ENCODE measurements at regions of chr3 and their contacts with region 1.

Region 1: DNA sequence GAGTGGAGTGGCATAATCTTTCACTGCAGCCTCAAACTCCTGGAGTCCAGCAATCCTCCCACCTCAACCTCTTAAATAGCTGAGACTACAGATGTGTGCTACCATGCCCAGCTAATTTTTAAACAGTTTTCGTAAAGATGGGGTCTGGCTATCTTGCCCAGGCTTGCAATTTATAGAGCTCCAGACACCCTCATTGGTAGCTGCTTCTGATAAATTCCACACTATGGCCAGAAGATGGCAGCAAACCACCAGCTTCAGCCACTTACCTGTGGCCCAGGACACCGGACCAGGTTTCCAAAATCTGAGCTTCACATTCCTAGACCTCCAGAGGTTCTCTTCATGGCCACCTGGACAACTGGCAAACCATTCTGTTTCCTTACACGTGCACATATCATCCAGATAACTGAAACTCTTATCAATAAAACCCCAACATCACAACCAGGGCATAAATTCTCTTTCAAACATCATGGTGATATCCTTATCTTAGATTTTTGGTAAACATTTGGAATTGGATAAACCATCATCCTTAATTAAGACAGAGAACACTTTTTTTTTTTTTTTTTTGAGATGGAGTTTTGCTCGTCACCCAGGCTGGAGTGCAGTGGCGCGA is 28.9 kb downstream of the FBXW12 start:
- DNase-seq: peak; percentile 69
- ATAC-seq: peak; percentile 80
- H3K4me3 ChIP-seq: no peak overlapping the region
- H3K27ac ChIP-seq: no peak overlapping the region
- H3K4me1 ChIP-seq: peaks cover 14 to 39% of the 10 kb centered on the region in 2 experiments
- H3K27me3 ChIP-seq: no peaks in the 10 kb centered on the region
- CTCF ChIP-seq: peak; percentile 69 to 97 (median 83)
- POLR2A ChIP-seq: no peak
- RAD21 ChIP-seq: peak; percentile 97

Region 2: GRCh38 chr3:48023377-48023776 is 377.6 kb before region 1 on chr3:
- CTCF ChIA-PET with region 1: no interaction called
- POLR2A ChIA-PET with region 1: no interaction called
- RAD21 ChIA-PET with region 1: no interaction called
- intact Hi-C with region 1: no loop called
- DNase-seq: no peak
- ATAC-seq: no peak
- H3K4me3 ChIP-seq: no peak overlapping the region
- H3K27ac ChIP-seq: no peak overlapping the region
- H3K4me1 ChIP-seq: peaks cover 9 to 18% of the 10 kb centered on the region in 2 experiments
- H3K27me3 ChIP-seq: no peaks in the 10 kb centered on the region
- CTCF ChIP-seq: no peak
- POLR2A ChIP-seq: no peak
- RAD21 ChIP-seq: no peak

Region 3: DNA sequence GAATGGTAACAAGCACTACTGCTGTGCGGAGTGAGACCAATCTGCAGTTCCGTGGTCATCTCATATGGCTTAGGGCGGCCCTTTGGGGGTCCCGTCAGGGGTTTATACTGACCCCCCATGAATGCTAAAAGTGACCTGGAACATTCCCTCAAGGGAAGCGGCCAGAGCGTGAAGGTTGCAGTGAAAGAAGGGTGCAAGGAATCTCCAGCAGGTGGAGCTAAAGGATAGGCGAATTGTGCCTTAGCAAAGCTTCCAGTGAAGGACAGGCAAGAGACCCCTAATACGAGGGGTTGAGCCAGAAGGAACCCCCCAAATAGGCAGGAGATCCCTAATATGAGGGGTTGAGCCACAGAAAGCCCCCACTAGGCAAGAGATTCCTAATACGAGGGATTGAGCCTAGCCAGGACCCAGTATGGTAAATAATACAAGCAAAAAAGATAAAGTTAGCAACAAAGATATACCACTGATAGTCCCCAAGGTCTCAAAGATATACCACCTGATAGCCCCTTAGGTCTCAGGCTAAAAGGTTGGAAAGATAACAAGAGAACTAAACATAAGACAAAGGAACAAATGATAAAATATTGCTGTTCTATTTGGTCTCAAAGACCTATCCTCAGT is 127.2 kb before region 1 on chr3:
- CTCF ChIA-PET with region 1: interaction called, 17 read pairs
- POLR2A ChIA-PET with region 1: no interaction called
- RAD21 ChIA-PET with region 1: interaction called, 3 read pairs
- intact Hi-C with region 1: loop called (anchors 1 kb)
- DNase-seq: peak; percentile 56
- ATAC-seq: peak; percentile 82
- H3K4me3 ChIP-seq: no peak overlapping the region
- H3K27ac ChIP-seq: no peak overlapping the region
- H3K4me1 ChIP-seq: no peaks in the 10 kb centered on the region
- H3K27me3 ChIP-seq: no peaks in the 10 kb centered on the region
- CTCF ChIP-seq: peak; percentile 82 to 91 (median 84)
- POLR2A ChIP-seq: no peak
- RAD21 ChIP-seq: peak; percentile 89

Region 4: GRCh38 chr3:48429317-48429959 is 28.5 kb after region 1 on chr3:
- CTCF ChIA-PET with region 1: interaction called, 386 read pairs
- POLR2A ChIA-PET with region 1: interaction called, 4 read pairs
- RAD21 ChIA-PET with region 1: interaction called, 13 to 23 read pairs
- intact Hi-C with region 1: no loop called
- DNase-seq: no peak
- ATAC-seq: peak; percentile 58
- H3K4me3 ChIP-seq: peak overlapping the region; percentile 58 to 70
- H3K27ac ChIP-seq: peak overlapping the region; percentile 81
- H3K4me1 ChIP-seq: peaks cover 44 to 59% of the 10 kb centered on the region in 2 experiments
- H3K27me3 ChIP-seq: no peaks in the 10 kb centered on the region
- CTCF ChIP-seq: no peak
- POLR2A ChIP-seq: no peak
- RAD21 ChIP-seq: no peak

Region 5: DNA sequence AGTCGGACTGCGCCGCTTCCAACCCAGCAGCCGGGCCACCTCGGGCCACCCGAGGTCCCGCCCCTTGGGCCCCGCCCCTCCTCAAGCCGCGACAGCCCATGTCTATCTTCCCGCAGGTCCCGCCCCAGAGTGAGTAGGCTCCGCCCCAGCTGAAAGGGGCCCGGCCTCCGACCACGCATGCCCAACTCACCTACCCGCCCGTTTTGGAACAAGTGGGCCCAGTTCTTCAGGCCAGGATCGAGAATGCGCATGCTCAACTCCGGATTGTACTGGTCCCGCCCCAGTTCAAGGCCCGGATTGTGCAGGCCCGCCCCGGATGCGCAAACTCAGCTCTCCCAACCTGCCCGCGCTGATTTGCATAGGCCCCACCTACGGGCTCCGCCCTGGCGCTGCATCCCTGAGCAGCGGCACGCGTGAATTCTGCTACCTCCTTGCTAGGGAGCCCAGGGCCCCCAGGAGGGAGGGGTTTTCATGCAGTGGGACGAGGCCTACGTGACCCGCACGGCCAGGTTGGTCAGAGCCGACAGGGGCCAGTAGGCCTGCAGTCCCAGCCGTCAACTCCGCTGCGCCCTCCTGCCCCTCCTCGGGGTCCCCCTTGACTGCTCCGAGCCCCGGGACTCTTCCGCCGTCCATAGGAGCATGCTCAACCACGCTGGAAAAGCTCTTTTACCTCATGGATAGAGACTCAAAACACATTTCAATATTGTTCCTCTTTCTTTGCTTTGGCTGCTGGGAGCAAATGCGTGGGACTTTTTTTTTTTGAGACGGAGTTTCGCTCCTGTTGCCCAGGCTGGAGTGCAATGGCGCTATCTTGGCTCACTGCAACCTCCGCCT is 156.1 kb after region 1 on chr3 and contains the start of gene PFKFB4:
- CTCF ChIA-PET with region 1: interaction called, 11 read pairs
- POLR2A ChIA-PET with region 1: no interaction called
- RAD21 ChIA-PET with region 1: interaction called in 1 of 2 experiments, 3 read pairs
- intact Hi-C with region 1: no loop called
- DNase-seq: peak; percentile 99
- ATAC-seq: peak; percentile 86
- H3K4me3 ChIP-seq: peak within 1 kb of the TSS; percentile 68 to 82
- H3K27ac ChIP-seq: peak within 1 kb of the TSS; percentile 94
- H3K4me1 ChIP-seq: peaks cover 28 to 68% of the 10 kb centered on the region in 2 experiments
- H3K27me3 ChIP-seq: no peaks in the 10 kb centered on the region
- CTCF ChIP-seq: no peak
- POLR2A ChIP-seq: peak; percentile 60
- RAD21 ChIP-seq: no peak
- total RNA-seq, gene PFKFB4: 20.3 TPM

Region 6: DNA sequence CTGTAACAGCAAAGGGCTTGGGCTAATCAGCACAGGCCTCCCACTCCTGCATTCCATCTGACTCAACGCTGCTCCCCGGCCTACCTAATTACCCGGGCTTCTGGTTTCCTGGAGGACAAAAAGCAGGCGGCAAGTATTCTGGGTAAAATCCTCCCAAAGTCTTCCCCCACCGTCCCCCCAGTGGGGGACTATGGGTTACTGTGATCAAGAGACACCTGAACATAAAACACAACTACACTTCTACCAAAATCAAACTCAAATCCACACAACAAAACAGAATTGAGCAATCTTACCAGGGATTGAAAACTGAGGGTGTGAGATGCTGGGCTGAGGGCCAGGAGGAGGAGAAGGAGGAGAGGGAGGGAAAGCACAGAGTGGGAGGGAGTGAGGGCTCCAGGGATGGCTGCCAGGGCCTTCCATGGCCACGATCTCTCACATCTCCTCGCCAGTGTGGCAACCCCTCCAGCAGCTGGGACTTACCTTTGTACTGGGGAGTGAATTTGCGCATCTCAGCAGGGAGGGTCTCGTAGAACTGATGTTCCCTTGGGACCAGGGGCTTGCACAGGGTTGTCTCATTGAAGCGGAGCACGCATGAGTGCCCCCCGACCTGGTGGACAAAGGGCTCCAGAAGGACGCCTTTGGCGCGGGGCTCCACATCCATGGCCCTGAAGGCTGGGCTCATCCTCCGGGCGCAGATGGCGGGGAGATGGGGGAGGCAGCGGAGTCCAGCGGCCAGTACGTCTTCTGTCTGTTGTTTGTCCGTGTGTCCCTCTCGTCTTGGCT is 293.9 kb after region 1 on chr3:
- CTCF ChIA-PET with region 1: no interaction called
- POLR2A ChIA-PET with region 1: no interaction called
- RAD21 ChIA-PET with region 1: no interaction called
- intact Hi-C with region 1: no loop called
- DNase-seq: peak; percentile 32
- ATAC-seq: peak; percentile 81
- H3K4me3 ChIP-seq: peak overlapping the region in 1 of 2 experiments; percentile 38; a peak in 3 of 4 replicates
- H3K27ac ChIP-seq: peak overlapping the region; percentile 73
- H3K4me1 ChIP-seq: peaks cover 26 to 38% of the 10 kb centered on the region in 2 experiments
- H3K27me3 ChIP-seq: no peaks in the 10 kb centered on the region
- CTCF ChIP-seq: no peak
- POLR2A ChIP-seq: no peak
- RAD21 ChIP-seq: no peak

Measured in HCT116 (cell line).